ENCODE measurements at regions of chr2 and their contacts with region 1.

Region 1: DNA sequence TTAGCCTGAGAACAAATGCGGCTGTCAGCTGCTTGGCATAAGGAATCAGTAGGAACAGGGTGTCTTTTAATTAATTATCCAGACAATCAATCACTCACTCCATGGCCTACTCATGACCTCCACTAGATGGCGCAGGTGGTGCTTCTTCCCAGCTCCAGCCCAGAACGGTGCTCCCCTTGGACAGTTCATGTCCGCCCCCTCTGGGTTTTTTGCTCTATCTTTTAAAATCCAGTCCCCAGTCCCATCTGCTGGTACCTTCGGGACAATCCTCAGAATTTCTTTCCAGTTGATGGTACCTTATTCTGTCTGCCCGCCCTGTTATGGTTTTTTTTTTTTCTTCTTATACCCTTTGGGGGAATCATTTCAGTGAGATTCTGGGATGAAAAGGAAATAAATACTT is 99.8 kb downstream of the CACNB4 start:
- DNase-seq: peak; percentile 58
- H3K4me3 Mint-ChIP-seq: no peak overlapping the region
- H3K27ac Mint-ChIP-seq: no peak overlapping the region
- H3K4me1 Mint-ChIP-seq: no peaks in the 10 kb centered on the region
- H3K27me3 Mint-ChIP-seq: no peaks in the 10 kb centered on the region

Region 2: DNA sequence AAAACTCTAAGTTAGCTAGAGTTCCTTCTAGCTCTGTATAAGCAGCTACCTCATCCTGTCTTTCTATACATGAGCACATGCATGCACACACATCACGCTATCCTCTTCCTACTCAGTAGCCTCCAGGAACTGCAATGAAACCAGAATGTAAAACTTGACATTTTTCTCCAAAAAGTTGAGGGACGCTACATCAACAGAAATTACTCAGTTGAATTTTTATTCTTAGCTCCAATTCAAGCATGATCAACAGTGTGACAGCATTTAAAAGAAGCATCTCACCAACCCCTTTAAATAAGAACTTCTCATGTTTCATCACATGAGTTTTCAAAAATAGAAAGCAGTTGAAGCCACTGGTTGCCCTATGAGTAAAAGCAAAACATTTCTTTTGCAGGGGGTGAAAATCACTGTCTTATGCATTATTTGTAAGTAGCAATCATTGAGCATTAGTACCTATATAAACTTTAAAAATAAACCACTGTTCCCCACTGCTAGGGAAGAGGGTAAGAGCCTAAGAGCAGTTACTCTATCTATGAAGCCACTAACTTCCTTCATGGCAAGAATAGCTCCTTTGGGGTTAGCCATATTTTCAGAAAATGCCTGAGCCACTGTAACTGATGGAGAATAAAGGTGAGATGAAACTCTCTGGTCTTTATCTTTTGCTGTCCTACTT is 93.0 kb before region 1 on chr2:
- CTCF ChIA-PET with region 1: no interaction called
- intact Hi-C with region 1: no loop called
- DNase-seq: no peak
- H3K4me3 Mint-ChIP-seq: no peak overlapping the region
- H3K27ac Mint-ChIP-seq: no peak overlapping the region
- H3K4me1 Mint-ChIP-seq: no peaks in the 10 kb centered on the region
- H3K27me3 Mint-ChIP-seq: peaks cover 9% of the 10 kb centered on the region

Region 3: DNA sequence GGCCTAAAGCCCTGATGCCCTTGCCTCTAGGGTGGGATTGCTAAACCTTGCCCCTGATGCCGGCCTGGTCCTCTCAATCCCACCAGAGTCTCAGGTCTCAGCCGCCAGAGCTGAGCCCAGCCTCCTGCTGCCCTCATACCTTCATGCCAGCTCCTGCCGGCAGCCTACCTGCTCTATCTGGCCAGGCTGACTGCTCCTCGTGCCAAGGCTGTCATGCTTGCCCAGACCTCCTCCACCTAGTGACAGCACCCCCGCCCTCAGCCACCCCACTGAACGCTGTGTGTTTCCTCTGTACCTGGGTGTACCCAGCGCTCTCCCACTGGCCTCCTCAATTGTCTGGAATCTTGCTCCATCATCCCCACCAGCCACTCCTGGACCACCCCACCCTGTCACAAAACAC is 20.3 kb before region 1 on chr2:
- CTCF ChIA-PET with region 1: interaction called, 10 read pairs
- intact Hi-C with region 1: no loop called
- DNase-seq: no peak
- H3K4me3 Mint-ChIP-seq: no peak overlapping the region
- H3K27ac Mint-ChIP-seq: no peak overlapping the region
- H3K4me1 Mint-ChIP-seq: no peaks in the 10 kb centered on the region
- H3K27me3 Mint-ChIP-seq: peaks cover 2% of the 10 kb centered on the region

Region 4: GRCh38 chr2:152012697-152013096 is 13.6 kb after region 1 on chr2:
- CTCF ChIA-PET with region 1: interaction called, 11 read pairs
- intact Hi-C with region 1: no loop called
- DNase-seq: no peak
- H3K4me3 Mint-ChIP-seq: no peak overlapping the region
- H3K27ac Mint-ChIP-seq: no peak overlapping the region
- H3K4me1 Mint-ChIP-seq: no peaks in the 10 kb centered on the region
- H3K27me3 Mint-ChIP-seq: peaks cover 1% of the 10 kb centered on the region